Calu3 (cell line): ENCODE measurements at regions of chr17 and their contacts with region 1.

Region 1: GRCh38 chr17:39164675-39165143 is 1.3 kb downstream of the ARL5C start:
- DNase-seq: peak; percentile 99
- H3K4me3 Mint-ChIP-seq: peak overlapping the region; percentile 6
- H3K27ac Mint-ChIP-seq: no peak overlapping the region
- H3K4me1 Mint-ChIP-seq: peaks cover 12% of the 10 kb centered on the region
- H3K27me3 Mint-ChIP-seq: peaks cover 80% of the 10 kb centered on the region
- CTCF ChIP-seq: peak; percentile 100

Region 2: GRCh38 chr17:39144416-39144840 is 20.3 kb before region 1 on chr17:
- CTCF ChIA-PET with region 1: interaction called, 11 read pairs
- intact Hi-C with region 1: no loop called
- DNase-seq: peak; percentile 87
- H3K4me3 Mint-ChIP-seq: no peak overlapping the region
- H3K27ac Mint-ChIP-seq: no peak overlapping the region
- H3K4me1 Mint-ChIP-seq: peaks cover 11% of the 10 kb centered on the region
- H3K27me3 Mint-ChIP-seq: peaks cover 47% of the 10 kb centered on the region
- CTCF ChIP-seq: no peak

Region 3: GRCh38 chr17:39174907-39175694 is 10.4 kb after region 1 on chr17:
- CTCF ChIA-PET with region 1: interaction called, 148 read pairs
- intact Hi-C with region 1: loop called (anchors 1 kb)
- DNase-seq: peak; percentile 92
- H3K4me3 Mint-ChIP-seq: no peak overlapping the region
- H3K27ac Mint-ChIP-seq: no peak overlapping the region
- H3K4me1 Mint-ChIP-seq: peaks cover 16% of the 10 kb centered on the region
- H3K27me3 Mint-ChIP-seq: no peaks in the 10 kb centered on the region
- CTCF ChIP-seq: peak; percentile 100

Region 4: GRCh38 chr17:39183720-39184119 is 19.0 kb after region 1 on chr17:
- CTCF ChIA-PET with region 1: interaction called, 148 read pairs
- intact Hi-C with region 1: loop called (anchors 1 kb)
- DNase-seq: no peak
- H3K4me3 Mint-ChIP-seq: no peak overlapping the region
- H3K27ac Mint-ChIP-seq: no peak overlapping the region
- H3K4me1 Mint-ChIP-seq: peaks cover 3% of the 10 kb centered on the region
- H3K27me3 Mint-ChIP-seq: no peaks in the 10 kb centered on the region
- CTCF ChIP-seq: peak; percentile 13

Region 5: GRCh38 chr17:39199820-39200069 is 35.0 kb after region 1 on chr17:
- CTCF ChIA-PET with region 1: interaction called, 31 read pairs
- intact Hi-C with region 1: no loop called
- DNase-seq: peak; percentile 99
- H3K4me3 Mint-ChIP-seq: peak overlapping the region; percentile 86
- H3K27ac Mint-ChIP-seq: peak overlapping the region; percentile 99
- H3K4me1 Mint-ChIP-seq: peaks cover 41% of the 10 kb centered on the region
- H3K27me3 Mint-ChIP-seq: no peaks in the 10 kb centered on the region
- CTCF ChIP-seq: no peak

Region 6: DNA sequence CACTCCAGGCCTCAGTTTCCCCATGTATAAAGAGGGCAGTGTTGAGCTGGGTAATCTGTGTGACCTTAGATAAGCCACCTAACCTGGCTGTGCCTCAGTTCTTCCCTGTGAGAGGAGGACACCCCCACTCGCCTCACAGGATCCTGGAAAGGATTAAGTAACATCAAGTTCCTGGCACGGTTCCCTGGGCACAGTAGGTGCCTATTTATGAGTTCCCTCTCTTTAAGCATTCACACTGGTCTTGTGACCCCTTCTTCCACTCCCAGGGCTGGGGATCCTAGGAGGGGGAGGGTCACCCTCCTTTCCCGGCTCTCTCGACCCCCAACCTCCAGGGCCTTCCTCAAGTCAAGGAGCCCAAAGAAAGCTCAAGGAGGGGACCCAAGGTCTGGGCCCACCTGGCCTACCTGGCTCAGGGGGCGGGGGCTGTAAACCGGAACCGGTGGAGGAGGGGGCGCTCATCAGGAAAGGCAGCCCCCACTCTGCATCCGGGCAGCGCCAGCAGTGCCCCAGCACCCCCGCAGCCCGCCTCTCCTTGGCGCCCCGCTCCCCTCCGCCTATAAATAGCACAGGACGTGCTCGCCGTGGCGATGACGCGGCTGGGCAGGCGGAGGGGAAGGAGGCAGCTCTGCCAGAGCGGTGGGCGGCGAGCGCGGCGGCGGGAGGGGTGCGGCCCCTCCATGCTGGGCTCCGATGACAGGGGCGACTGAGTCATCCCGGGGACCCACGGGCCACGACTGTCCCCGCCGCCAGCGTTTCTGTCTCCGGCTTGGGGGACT is 44.8 kb after region 1 on chr17:
- CTCF ChIA-PET with region 1: interaction called, 14 read pairs
- intact Hi-C with region 1: no loop called
- DNase-seq: peak; percentile 81
- H3K4me3 Mint-ChIP-seq: peak overlapping the region; percentile 55
- H3K27ac Mint-ChIP-seq: peak overlapping the region; percentile 16
- H3K4me1 Mint-ChIP-seq: peaks cover 43% of the 10 kb centered on the region
- H3K27me3 Mint-ChIP-seq: peaks cover 63% of the 10 kb centered on the region
- CTCF ChIP-seq: peak; percentile 13

Region 7: GRCh38 chr17:39235555-39236449 is 71.1 kb after region 1 on chr17:
- CTCF ChIA-PET with region 1: interaction called, 34 read pairs
- intact Hi-C with region 1: no loop called
- DNase-seq: peak; percentile 88
- H3K4me3 Mint-ChIP-seq: no peak overlapping the region
- H3K27ac Mint-ChIP-seq: no peak overlapping the region
- H3K4me1 Mint-ChIP-seq: peaks cover 49% of the 10 kb centered on the region
- H3K27me3 Mint-ChIP-seq: peaks cover 28% of the 10 kb centered on the region
- CTCF ChIP-seq: peak; percentile 100